HEK293 (cell line): ENCODE measurements at regions of chr6 and their contacts with region 1.

Region 1: DNA sequence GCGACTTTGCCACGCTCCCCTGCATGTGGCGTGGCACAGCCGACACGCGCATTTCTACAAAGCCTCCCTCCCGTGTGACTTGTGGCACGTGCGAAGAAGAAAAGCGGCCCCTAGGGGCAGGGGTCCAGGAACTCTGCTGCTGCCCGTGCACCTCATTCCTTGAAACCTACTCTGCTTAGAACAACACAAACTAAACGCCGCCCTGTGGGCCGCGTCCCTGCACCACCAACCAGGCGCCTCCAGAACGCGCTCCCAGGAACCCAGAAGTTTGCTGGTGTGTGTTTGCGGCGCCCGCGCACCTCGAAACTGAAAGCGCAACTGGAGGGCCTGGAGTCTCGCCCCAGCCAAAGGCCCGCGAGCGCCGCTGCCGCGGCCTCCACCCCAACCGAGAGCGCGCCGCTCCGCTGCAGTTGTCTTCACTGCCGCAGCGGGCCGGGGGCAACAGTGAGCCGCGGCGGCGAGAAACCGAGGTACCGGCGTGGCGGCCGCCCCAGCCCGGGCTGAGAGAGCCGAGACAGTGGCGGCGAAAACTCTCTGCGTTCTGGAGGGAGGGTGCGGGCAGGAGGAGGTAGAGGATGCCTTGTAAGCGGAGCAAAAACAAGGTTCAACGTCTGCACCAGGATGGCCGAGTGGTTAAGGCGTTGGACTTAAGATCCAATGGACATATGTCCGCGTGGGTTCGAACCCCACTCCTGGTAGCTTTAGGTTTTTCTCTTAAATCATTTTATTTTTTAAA is 65.8 kb downstream of the STX11 start:
- H3K4me3 ChIP-seq: peak overlapping the region; percentile 68
- H3K27ac ChIP-seq: peak overlapping the region; percentile 78
- H3K4me1 ChIP-seq: no peaks in the 10 kb centered on the region
- CTCF ChIP-seq: peak; percentile 93

Region 2: DNA sequence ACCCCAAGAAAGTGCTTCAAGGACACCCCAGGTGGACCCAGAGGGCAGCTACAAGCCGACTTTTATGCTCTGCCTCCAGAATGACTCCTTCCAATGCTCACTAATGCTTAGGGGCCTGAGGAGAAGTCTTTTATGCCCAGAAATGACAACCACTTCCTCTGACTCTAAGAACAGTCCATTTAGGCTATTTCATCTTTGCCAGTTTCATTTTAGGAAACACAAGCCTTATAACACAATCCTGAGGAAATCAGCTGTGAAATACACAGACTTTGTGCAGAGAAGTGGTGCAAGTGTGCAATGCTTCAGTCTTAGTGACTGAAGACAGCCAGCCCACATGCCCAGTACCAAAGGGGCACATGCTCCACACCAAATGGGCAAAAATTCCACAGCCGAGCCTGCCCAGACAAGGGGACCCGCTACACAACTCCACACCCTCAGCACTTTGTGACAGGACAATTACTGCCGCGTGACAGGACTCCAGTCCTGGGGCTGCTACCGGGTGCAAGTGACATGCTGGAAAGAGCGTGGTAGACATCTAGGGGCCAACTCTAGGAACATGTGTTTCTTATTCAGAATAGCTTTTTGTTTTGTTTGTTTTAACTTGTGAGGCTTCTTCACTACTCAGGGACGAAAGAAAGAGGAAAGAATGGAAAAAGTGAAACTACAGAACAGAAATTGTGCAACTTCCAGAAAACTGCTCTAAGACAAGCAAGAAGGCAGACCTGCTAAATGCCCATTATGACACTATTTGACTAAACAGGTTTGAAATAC is 179.9 kb before region 1 on chr6:
- CTCF ChIA-PET with region 1: no interaction called
- POLR2A ChIA-PET with region 1: no interaction called
- H3K4me3 ChIP-seq: no peak overlapping the region
- H3K27ac ChIP-seq: no peak overlapping the region
- H3K4me1 ChIP-seq: no peaks in the 10 kb centered on the region
- CTCF ChIP-seq: no peak

Region 3: DNA sequence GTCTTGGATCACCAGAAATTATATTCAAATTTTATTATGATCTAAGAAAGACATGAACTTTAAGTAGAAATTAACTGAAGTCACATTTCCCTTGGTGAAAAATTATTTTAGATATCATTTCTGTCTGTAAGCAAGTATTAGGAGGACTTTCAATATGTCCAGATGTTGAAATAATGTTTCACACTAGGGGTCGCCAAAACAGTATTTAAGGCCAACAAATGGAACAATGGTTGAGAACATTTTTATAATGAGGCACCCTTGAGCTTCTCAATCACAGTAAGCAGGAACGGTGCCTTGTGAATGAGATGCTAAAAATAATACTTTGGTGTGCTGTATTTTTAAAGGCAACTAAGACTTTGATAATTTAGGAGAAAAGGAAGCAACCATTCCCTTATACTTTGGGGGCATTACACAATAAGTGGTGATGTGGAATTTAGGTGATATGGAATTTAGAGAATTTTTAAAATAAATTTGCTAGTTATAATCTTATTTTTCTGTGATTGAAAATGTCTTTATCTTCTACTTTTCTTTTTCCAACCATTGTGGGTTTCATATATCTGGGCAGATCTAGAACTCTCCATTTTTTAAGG is 111.1 kb before region 1 on chr6:
- CTCF ChIA-PET with region 1: interaction called, 16 read pairs
- POLR2A ChIA-PET with region 1: no interaction called
- H3K4me3 ChIP-seq: no peak overlapping the region
- H3K27ac ChIP-seq: no peak overlapping the region
- H3K4me1 ChIP-seq: no peaks in the 10 kb centered on the region
- CTCF ChIP-seq: peak; percentile 41; the same call in 1 of the 2 replicates

Region 4: GRCh38 chr6:144195679-144196270 is 20.3 kb before region 1 on chr6:
- CTCF ChIA-PET with region 1: no interaction called
- POLR2A ChIA-PET with region 1: no interaction called
- H3K4me3 ChIP-seq: no peak overlapping the region
- H3K27ac ChIP-seq: no peak overlapping the region
- H3K4me1 ChIP-seq: no peaks in the 10 kb centered on the region
- CTCF ChIP-seq: no peak

Region 5: DNA sequence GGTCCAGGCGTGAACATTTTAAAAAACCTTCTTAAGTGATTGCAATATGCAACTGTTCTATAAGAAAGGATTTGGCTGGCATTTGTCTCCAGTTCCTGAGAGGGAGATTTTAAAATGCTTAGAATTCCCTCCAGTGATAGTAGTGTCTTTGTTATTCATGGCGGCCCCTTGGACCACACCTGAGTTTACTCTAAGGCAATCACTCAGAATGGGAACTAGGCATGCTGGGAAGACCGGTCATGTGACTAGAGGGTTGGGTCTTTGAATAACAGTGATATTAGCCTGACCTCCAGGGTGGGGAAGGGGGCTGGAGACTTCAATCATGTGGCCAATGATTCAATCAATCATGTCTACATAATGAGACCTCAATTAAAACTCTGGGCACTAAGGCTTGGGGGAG is 18.3 kb after region 1 on chr6:
- CTCF ChIA-PET with region 1: interaction called, 10 read pairs
- POLR2A ChIA-PET with region 1: interaction called, 3 read pairs
- H3K4me3 ChIP-seq: no peak overlapping the region
- H3K27ac ChIP-seq: no peak overlapping the region
- H3K4me1 ChIP-seq: no peaks in the 10 kb centered on the region
- CTCF ChIP-seq: no peak

Region 6: GRCh38 chr6:144252259-144252658 is 36.2 kb after region 1 on chr6:
- CTCF ChIA-PET with region 1: interaction called, 19 read pairs
- POLR2A ChIA-PET with region 1: no interaction called
- H3K4me3 ChIP-seq: no peak overlapping the region
- H3K27ac ChIP-seq: no peak overlapping the region
- H3K4me1 ChIP-seq: no peaks in the 10 kb centered on the region
- CTCF ChIP-seq: no peak